ENCODE measurements at regions of chr5 and their contacts with region 1.

Region 1: GRCh38 chr5:96601811-96602244 is 60.3 kb upstream of the CAST start:
- H3K4me3 ChIP-seq: no peak overlapping the region
- H3K27ac ChIP-seq: no peak overlapping the region
- H3K4me1 ChIP-seq: no peaks in the 10 kb centered on the region
- CTCF ChIP-seq: 0 out of 2 replicates have a peak, but pooled peaks have one; percentile 30

Region 2: GRCh38 chr5:96324708-96325107 is 277.1 kb before region 1 on chr5:
- CTCF ChIA-PET with region 1: no interaction called
- POLR2A ChIA-PET with region 1: no interaction called
- H3K4me3 ChIP-seq: no peak overlapping the region
- H3K27ac ChIP-seq: no peak overlapping the region
- H3K4me1 ChIP-seq: no peaks in the 10 kb centered on the region
- CTCF ChIP-seq: no peak

Region 3: DNA sequence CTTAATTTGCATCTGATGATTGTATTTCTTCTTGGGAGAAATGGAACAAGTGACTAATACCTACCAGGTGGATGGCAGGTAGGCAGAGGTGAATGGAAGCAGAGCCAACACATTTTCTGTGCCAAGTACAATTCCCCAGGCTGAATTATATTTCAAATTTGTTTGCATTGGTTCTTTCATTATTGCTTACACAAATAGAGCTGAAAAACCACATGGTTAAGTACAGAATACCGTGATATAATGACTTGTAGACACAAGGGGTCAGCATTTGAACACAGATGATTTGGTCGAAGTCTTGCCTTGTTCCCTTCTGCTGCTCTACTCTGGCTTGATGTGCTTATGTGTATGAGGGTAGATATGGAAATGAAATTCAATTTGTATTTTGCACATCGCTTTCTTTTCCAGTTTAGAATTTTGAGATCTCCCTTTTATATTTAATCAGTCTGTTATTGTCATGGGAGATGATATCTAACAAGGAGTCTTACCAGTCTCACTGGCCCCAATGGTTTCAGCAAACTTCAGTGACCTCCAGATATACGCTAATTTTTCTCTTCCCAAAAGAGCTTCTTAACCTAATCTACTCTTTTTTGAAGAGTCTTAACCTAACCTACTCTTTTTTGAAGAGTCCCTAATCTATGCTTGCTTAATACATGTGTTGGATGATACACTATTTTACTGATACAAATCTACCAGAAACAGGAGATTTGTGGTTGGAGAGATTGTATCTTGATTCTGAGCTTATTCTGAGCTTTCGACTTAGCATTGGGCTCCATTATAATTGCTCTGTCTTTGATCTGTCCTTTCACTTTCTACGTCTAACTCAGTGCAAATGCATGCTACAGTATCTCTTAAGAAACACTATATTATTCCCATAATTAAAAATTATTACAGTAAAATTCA is 256.9 kb before region 1 on chr5:
- CTCF ChIA-PET with region 1: interaction called, 127 read pairs
- POLR2A ChIA-PET with region 1: no interaction called
- H3K4me3 ChIP-seq: no peak overlapping the region
- H3K27ac ChIP-seq: no peak overlapping the region
- H3K4me1 ChIP-seq: peaks cover 20% of the 10 kb centered on the region
- CTCF ChIP-seq: peak; percentile 51; the same call in 1 of the 2 replicates

Region 4: DNA sequence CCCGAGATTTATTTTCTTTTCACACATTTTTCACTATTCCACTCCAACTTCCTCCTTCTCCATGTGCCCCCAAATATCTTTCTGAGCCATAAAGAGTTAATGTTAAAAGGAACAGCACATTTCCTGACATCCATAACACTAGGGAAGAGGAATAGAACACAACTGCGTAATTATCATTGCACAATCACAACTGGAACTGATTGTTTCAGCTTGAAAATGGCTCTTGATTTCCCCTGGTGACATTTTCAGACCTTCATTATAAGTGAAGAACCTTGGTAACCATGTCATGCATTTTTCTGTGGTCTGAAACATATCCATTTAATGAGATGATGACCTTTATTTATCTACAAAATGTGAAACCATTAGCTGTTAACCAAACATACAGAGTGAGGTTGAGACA is 251.2 kb before region 1 on chr5:
- CTCF ChIA-PET with region 1: interaction called, 127 read pairs
- POLR2A ChIA-PET with region 1: no interaction called
- H3K4me3 ChIP-seq: no peak overlapping the region
- H3K27ac ChIP-seq: no peak overlapping the region
- H3K4me1 ChIP-seq: no peaks in the 10 kb centered on the region
- CTCF ChIP-seq: no peak

Region 5: DNA sequence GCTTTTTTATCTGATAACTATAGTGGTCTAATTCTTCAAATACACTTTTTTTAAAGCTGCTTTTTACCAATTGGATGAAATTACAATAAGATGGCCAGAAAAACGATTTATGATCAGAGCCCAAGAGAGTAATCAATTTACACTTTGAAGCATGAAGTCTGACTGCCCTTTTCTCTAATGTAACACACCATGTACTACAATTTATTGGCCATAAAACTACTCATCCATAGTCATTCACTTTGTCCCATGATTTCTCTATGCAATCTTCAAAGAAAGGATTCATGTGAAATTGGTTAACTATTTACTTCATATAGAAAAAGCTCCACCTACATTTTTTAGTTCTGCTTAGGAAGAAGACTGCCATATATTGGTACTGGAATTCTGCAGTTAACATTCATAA is 13.3 kb before region 1 on chr5:
- CTCF ChIA-PET with region 1: interaction called, 16 read pairs
- POLR2A ChIA-PET with region 1: no interaction called
- H3K4me3 ChIP-seq: no peak overlapping the region
- H3K27ac ChIP-seq: no peak overlapping the region
- H3K4me1 ChIP-seq: no peaks in the 10 kb centered on the region
- CTCF ChIP-seq: no peak